ENCODE measurements at regions of chr5 and their contacts with region 1.

Region 1: DNA sequence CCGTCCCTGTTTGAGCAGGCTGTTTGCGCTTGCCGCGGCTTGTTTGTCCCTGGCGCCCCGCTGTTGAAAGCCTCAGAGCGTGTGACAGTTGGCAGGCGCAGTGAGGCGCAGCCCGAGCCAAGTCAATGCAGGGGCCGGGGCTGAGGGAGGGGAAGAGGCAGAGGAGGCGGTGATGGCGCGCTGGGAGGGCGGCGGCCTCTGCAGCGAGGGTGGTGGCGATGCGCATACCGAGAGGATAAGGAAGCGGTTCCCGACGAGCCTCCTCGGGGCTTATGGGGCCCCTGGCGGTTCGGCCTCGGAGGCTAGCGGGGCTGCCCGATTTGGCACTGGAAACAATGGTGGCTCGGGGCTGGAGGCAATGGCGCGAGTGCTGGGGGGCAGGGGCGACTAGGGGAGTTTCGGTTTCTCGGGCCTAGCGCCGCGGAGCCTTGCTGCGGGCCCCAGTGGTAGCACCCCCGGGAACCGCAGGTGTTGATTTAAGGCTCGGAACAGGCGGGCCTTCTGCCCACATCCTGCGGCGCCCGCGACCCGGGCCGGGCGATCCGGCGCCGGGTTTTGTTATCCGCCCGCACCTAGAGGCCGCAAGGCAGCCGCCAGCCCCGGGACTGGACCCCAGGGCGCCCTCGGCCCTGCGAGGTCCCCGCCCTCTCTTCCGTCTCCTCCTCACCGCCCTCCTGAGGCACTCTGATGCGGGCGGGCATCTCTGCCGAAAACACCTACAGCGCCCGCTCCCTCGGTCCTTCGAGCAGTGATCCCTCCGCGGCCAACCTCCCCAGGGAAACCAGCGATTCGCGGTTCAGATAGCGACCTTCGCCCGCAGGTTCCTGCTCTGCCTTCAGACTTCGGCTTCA is 947 bp upstream of the LNPEP start:
- DNase-seq: peak; percentile 96
- H3K4me3 Mint-ChIP-seq: peak overlapping the region; percentile 97
- H3K27ac Mint-ChIP-seq: peak overlapping the region; percentile 98
- H3K4me1 Mint-ChIP-seq: peaks cover 67% of the 10 kb centered on the region
- H3K27me3 Mint-ChIP-seq: no peaks in the 10 kb centered on the region

Region 2: GRCh38 chr5:96614110-96614691 is 320.7 kb before region 1 on chr5:
- intact Hi-C with region 1: loop called (anchors 2 kb)
- DNase-seq: peak; percentile 16
- H3K4me3 Mint-ChIP-seq: no peak overlapping the region
- H3K27ac Mint-ChIP-seq: no peak overlapping the region
- H3K4me1 Mint-ChIP-seq: peaks cover 6% of the 10 kb centered on the region
- H3K27me3 Mint-ChIP-seq: peaks cover 43% of the 10 kb centered on the region

Region 3: GRCh38 chr5:96868603-96869371 is 66.1 kb before region 1 on chr5:
- intact Hi-C with region 1: loop called (anchors 1 kb)
- DNase-seq: no peak
- H3K4me3 Mint-ChIP-seq: no peak overlapping the region
- H3K27ac Mint-ChIP-seq: peak overlapping the region; percentile 47
- H3K4me1 Mint-ChIP-seq: peaks cover 57% of the 10 kb centered on the region
- H3K27me3 Mint-ChIP-seq: no peaks in the 10 kb centered on the region

Region 4: DNA sequence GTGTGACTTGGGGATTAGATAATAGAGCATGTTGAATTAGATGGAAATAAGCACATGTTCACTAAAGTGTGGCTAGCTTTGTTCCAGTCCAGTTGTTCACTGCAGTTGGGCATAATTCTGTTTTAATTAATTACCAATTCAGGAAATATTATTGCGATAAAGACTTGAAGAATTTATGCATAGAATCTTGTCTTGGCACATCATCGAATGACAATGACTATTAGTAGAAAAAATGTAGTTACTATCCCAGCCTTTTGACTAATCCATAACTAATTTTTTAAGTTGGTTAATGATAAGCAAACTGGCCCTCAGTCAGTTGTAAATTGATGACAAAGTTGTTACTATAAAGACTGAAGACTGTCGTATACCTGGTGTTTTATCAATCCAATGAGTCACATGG is 11.4 kb after region 1 on chr5:
- intact Hi-C with region 1: loop called (anchors 1 kb)
- DNase-seq: no peak
- H3K4me3 Mint-ChIP-seq: no peak overlapping the region
- H3K27ac Mint-ChIP-seq: no peak overlapping the region
- H3K4me1 Mint-ChIP-seq: peaks cover 52% of the 10 kb centered on the region
- H3K27me3 Mint-ChIP-seq: no peaks in the 10 kb centered on the region

Region 5: GRCh38 chr5:96997265-96997859 is 62.4 kb after region 1 on chr5:
- intact Hi-C with region 1: loop called (anchors 2 kb)
- DNase-seq: no peak
- H3K4me3 Mint-ChIP-seq: no peak overlapping the region
- H3K27ac Mint-ChIP-seq: no peak overlapping the region
- H3K4me1 Mint-ChIP-seq: peaks cover 35% of the 10 kb centered on the region
- H3K27me3 Mint-ChIP-seq: no peaks in the 10 kb centered on the region

Region 6: DNA sequence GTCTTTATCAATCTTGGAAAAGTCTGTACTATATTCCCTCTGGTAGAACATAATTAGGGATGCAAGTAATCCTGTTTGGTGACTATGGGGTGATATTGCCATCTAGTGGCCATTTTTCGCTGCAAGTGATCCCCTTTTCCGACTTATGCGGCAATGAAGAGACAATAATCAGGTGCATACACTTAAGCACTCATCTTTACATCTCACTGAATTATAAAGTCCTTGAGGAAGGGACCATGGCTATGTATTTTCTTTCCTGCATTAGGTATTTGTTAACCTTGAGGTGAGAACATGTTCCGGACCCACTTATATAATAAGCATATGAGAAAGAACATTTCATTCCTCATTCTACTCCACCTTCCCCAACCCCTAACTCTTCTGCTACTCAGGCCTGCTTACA is 227.1 kb after region 1 on chr5:
- intact Hi-C with region 1: loop called (anchors 1 kb)
- DNase-seq: peak; percentile 20
- H3K4me3 Mint-ChIP-seq: no peak overlapping the region
- H3K27ac Mint-ChIP-seq: no peak overlapping the region
- H3K4me1 Mint-ChIP-seq: no peaks in the 10 kb centered on the region
- H3K27me3 Mint-ChIP-seq: peaks cover 2% of the 10 kb centered on the region

Measured in activated T-helper 1 cell treated with anti-CD3 and anti-CD28 coated beads, Interleukin-12 subunit alpha, Interleukin-12 subunit beta, Interleukin-2, Interleukin-4 antibody, amounts not matched to agents 30 ng/mL and 10 ng/mL and 1 ng/mL, durations not matched to agents 14 hours and 24 hours and 36 hours (primary cell).